Brain microvascular endothelial cell (primary cell): ENCODE measurements at regions of chr1 and their contacts with region 1.

Region 1: DNA sequence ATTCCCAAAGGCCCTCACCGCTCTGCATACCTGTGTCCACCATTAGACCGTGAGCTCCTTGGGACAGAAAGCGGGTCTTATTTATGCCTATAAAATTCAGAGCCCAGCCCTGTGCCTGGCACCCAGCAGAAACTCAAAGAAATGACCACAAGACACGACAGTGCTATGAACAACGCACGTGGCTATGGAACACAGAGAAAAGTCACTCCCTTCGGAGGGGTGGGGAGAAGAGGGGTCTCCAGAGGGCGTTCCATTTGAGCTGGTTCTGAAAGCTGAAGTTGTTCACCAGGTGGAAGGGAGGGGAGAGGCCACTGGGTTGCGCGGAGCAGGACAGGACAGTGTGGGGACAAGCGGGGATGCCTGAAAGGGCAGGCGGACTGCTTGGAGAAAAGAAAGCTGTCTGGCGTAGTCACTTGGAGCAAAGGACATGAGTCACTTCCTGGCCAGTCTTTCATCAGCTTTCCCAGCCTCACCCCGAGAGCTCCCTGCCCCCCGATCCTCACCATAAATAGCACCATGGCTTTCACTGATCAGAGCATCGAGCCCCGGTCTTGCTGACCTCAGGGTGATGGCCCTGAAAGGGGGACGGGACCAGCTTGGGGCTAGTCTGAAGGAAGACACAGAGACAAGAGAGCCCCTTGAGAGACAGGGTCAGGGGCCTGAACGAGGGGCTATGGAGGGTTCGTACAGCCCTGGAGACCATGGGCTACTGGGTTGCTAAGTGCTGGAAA is 28.5 kb downstream of the ECE1 start:
- DNase-seq: peak; percentile 98
- H3K4me3 ChIP-seq: no peak overlapping the region
- H3K27ac ChIP-seq: peak overlapping the region; percentile 97
- H3K27me3 ChIP-seq: no peaks in the 10 kb centered on the region
- CTCF ChIP-seq: no peak

Region 2: GRCh38 chr1:21334214-21335087 is 72.7 kb after region 1 on chr1:
- in situ Hi-C with region 1: loop called (anchors 5 kb)
- DNase-seq: peak; percentile 89
- H3K4me3 ChIP-seq: peak overlapping the region; percentile 53
- H3K27ac ChIP-seq: peak overlapping the region; percentile 94
- H3K27me3 ChIP-seq: no peaks in the 10 kb centered on the region
- CTCF ChIP-seq: peak; percentile 95